Astrocyte of the cerebellum (primary cell): ENCODE measurements at regions of chr9 and their contacts with region 1.

Region 1: DNA sequence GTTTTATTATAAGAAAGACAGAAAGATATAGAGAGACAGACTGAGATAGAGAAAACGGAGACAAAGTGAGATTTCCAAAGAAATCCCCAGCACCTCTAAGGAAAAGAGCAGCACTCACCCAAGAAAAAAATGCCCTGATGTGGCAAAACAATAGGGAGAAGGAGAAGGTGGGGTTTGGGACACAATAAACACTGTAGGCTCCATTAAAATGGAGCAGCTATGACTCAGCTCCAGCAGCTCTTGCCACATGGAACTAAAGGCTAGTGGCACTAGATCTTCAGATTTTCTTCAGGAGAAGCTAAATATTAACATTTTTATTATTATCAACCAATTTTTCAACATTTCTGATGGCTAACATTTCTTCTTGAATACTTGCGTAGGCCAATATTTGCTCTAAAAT is 321.8 kb downstream of the TRIM32 start:
- DNase-seq: no peak
- H3K4me3 ChIP-seq: no peak overlapping the region
- CTCF ChIP-seq: no peak

Region 2: DNA sequence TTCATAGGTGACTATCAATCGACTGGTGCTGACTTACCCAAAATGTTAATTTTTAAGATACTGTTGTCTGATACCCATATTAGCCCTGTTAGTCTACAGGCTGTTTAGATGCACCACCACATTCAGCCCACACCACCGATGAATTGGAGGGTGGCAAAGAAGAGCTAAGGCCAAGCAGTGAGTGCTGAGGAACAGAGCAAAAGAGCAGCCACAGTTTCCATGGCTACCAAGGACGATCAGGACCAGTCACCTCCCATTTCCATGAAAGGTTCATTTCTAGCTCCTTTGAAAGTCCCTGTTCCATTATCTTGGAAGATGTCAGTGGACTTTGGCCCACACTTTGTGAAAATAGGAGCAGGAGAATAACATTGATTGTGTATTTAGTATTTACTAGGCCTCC is 41.1 kb after region 1 on chr9:
- in situ Hi-C with region 1: loop called (anchors 5 kb)
- DNase-seq: no peak
- H3K4me3 ChIP-seq: no peak overlapping the region
- CTCF ChIP-seq: no peak